ENCODE measurements at regions of chr3 and their contacts with region 1.

Region 1: DNA sequence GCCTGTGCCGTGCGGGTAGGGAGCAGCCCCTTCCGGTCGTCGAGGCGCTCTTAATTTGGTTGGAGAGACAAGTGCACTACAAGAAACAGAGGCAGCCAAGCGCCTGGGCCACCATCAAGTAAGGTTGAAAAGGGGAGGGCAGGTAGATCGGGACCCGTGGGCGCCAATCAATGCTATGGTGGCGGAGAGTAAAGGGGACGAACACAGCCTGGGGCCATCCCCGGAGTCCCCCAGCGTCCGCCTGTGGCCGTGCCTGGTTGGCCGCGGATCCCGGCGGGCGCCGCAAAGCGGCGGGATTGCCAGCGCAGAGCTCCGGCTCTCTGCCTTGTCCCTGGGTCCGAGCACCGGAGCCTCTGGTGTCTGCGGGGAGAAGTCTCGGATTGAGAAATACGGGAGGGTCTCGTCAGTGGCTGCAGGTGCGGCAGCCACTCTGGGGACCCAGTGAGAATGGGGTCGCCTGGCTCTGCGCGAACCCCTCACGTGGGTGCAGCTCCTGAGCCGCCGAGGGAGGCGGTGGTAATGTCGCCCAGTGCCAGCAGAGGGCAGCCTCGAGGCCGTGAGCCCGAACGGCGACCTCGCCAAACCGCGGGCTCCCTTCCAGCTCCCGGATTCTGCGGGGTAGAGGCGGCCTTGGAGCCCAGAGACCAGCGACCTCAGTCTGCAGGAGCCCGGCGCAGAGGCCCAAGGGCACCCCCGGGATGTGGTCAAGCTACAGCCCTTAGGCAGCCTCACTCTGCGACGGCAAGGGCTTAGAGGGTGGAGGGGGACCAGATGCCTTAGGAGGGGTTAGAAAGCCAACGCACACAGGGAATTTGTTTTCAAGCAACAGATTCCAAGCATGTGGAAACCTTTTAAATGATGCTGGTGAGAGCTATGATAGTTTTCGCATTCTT is 10.8 kb downstream of the FOXL2 start:
- DNase-seq: peak; percentile 52
- ATAC-seq: peak; percentile 88
- H3K4me3 ChIP-seq: peak overlapping the region; percentile 43 to 68
- H3K27ac ChIP-seq: peak overlapping the region; percentile 21
- H3K4me1 ChIP-seq: peaks cover 6 to 18% of the 10 kb centered on the region in 2 experiments; a peak in 3 of 4 replicates
- H3K27me3 ChIP-seq: no peaks in the 10 kb centered on the region
- CTCF ChIP-seq: peak; percentile 70 to 91 (median 76)
- POLR2A ChIP-seq: no peak
- RAD21 ChIP-seq: peak; percentile 61

Region 2: DNA sequence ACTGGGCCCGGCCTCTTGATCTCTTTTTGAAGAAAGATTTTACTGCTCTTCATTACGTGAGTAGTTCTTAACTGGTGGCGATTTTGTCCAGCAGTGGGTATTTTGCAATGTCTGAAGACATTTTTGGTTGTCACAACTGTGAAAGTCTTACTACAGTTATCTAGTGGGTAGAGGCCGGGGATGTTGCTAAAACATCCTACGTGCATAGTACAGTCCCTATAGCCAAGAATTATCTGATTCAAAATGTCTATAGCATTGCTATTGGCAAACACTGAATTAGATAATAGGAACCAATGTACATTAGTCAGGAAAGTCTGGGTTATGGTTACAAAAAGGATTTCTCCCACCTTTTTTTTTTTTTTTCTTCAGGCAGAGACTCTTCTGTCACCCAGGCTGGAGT is 27.2 kb before region 1 on chr3:
- CTCF ChIA-PET with region 1: no interaction called
- POLR2A ChIA-PET with region 1: no interaction called
- RAD21 ChIA-PET with region 1: no interaction called
- intact Hi-C with region 1: no loop called
- DNase-seq: no peak
- ATAC-seq: no peak
- H3K4me3 ChIP-seq: no peak overlapping the region
- H3K27ac ChIP-seq: no peak overlapping the region
- H3K4me1 ChIP-seq: no peaks in the 10 kb centered on the region; a peak in 1 of 4 replicates
- H3K27me3 ChIP-seq: no peaks in the 10 kb centered on the region
- CTCF ChIP-seq: no peak
- POLR2A ChIP-seq: no peak
- RAD21 ChIP-seq: no peak

Region 3: GRCh38 chr3:138974462-138974861 is 38.4 kb after region 1 on chr3:
- CTCF ChIA-PET with region 1: interaction called, 42 read pairs
- POLR2A ChIA-PET with region 1: no interaction called
- RAD21 ChIA-PET with region 1: no interaction called
- intact Hi-C with region 1: loop called (anchors 5 kb)
- DNase-seq: no peak
- ATAC-seq: no peak
- H3K4me3 ChIP-seq: no peak overlapping the region
- H3K27ac ChIP-seq: no peak overlapping the region
- H3K4me1 ChIP-seq: peaks cover 0 to 7% of the 10 kb centered on the region in 2 experiments; a peak in 2 of 4 replicates
- H3K27me3 ChIP-seq: no peaks in the 10 kb centered on the region
- CTCF ChIP-seq: no peak
- POLR2A ChIP-seq: no peak
- RAD21 ChIP-seq: no peak

Region 4: GRCh38 chr3:139202226-139202958 is 266.3 kb after region 1 on chr3:
- CTCF ChIA-PET with region 1: interaction called, 5 read pairs
- POLR2A ChIA-PET with region 1: no interaction called
- RAD21 ChIA-PET with region 1: interaction called in 1 of 2 experiments, 4 read pairs
- intact Hi-C with region 1: loop called (anchors 5 kb)
- DNase-seq: peak; percentile 54
- ATAC-seq: peak; percentile 92
- H3K4me3 ChIP-seq: peak overlapping the region in 1 of 2 experiments; percentile 24; a peak in 1 of 4 replicates
- H3K27ac ChIP-seq: peak overlapping the region; percentile 26; the same call in 1 of the 2 replicates
- H3K4me1 ChIP-seq: peaks cover 13 to 19% of the 10 kb centered on the region in 2 experiments
- H3K27me3 ChIP-seq: no peaks in the 10 kb centered on the region
- CTCF ChIP-seq: peak; percentile 22 to 45 (median 38); a peak in 3 of 6 replicates
- POLR2A ChIP-seq: no peak
- RAD21 ChIP-seq: peak; percentile 81